ENCODE measurements at regions of chr7 and their contacts with region 1.

Region 1: DNA sequence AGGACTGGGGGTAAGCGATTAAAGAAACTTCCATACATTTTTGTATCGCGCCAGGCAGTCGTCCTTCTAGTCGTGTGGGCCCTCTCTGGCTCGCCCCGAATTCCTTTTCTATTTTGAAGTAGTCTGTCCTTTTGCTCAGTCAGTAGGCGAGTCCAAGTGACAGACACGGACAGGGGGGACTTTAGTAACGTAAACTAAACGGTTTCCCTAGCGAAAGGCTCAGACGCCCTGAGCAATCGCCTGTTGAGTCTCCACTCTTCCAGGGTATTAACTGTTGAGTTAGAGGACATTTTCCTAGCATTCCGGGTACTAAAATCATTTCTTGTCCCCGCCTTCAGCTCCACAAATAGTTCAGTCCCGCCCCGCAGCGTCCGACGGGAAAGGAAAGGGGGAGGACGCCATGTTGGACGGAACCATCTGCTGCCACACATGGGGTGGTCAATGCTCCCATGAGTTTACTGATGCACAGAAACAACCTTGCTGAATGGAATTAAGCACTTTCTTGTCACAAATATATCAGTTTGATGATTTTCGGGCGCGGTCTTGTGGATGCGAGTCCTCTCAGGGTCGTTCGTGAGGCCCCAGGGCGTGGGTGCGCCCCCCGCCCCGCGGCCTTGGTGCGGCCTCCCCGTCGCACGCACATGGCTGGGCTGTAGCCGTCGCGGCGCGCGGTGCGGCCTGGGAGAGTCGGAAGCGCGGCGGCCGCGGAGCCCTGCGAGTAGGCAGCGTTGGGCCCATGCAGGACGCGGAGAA is at the start of gene EIF3B:
- DNase-seq: peak; percentile 91 to 96 (median 95)
- H3K4me3 ChIP-seq: peak within 1 kb of the TSS; percentile 68 to 90
- H3K4me3 Mint-ChIP-seq: peak within 1 kb of the TSS; percentile 89 to 98 (median 95)
- H3K27ac ChIP-seq: peak within 1 kb of the TSS; percentile 95
- H3K27ac Mint-ChIP-seq: peak within 1 kb of the TSS; percentile 99 to 100 (median 100)
- H3K4me1 ChIP-seq: peaks cover 46% of the 10 kb centered on the region
- H3K4me1 Mint-ChIP-seq: peaks cover 16 to 48% (median 35%) of the 10 kb centered on the region in 4 donors
- H3K27me3 ChIP-seq: no peaks in the 10 kb centered on the region
- H3K27me3 Mint-ChIP-seq: no peaks in the 10 kb centered on the region
- total RNA-seq, gene EIF3B: 126 to 138 TPM

Region 2: DNA sequence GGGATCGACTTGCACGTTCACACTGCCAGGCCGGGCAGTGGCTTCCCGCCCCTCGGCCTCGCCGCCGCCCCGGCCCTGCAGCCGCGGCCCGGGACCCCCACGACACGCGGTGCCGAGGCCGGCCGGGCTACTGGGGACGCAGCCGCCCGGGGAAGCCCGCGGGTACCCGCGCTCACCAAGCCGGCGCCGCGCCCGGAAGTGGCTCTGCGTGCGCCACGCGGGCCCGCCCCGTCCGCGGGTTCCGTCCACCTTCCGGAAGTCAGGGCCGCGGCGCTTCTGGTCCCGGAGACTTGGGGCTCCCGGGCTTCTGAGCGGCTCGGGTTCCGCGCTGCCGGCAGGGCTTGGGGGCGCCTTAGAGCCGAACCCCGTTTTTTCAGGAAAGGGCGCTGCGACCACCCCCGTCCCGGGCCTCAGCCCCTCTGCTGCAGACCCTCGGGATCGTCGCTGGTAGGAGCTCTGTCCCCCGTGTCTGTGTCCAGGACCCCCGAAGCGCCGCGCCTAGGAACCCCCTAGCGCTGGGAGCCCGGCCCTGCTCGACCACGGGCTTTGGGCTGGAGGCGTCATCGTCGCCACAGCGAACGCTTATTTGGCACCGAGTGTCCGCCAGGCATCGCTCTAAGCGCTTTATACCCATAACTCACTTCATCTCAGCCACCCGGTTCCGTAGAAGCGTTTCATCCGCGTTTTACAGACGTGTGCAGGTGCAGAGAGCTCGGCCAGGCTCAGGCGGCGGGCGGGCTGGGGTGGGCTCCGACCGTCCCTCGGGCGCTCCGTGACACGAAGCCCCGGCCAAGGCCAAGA is 784.3 kb before region 1 on chr7 and contains the start of gene PSMG3:
- CTCF ChIA-PET with region 1: no interaction called
- POLR2A ChIA-PET with region 1: interaction called, 12 read pairs
- intact Hi-C with region 1: no loop called
- DNase-seq: peak; percentile 83 to 87 (median 85)
- H3K4me3 ChIP-seq: peak within 1 kb of the TSS; percentile 60 to 76
- H3K4me3 Mint-ChIP-seq: peak within 1 kb of the TSS; percentile 86 to 91 (median 88)
- H3K27ac ChIP-seq: peak within 1 kb of the TSS; percentile 77
- H3K27ac Mint-ChIP-seq: peak within 1 kb of the TSS; percentile 87 to 97 (median 94)
- H3K4me1 ChIP-seq: peaks cover 20% of the 10 kb centered on the region
- H3K4me1 Mint-ChIP-seq: peaks cover 11 to 40% (median 21%) of the 10 kb centered on the region in 4 donors
- H3K27me3 ChIP-seq: no peaks in the 10 kb centered on the region
- H3K27me3 Mint-ChIP-seq: no peaks in the 10 kb centered on the region
- total RNA-seq, gene PSMG3: 19.3 to 22.2 TPM

Region 3: DNA sequence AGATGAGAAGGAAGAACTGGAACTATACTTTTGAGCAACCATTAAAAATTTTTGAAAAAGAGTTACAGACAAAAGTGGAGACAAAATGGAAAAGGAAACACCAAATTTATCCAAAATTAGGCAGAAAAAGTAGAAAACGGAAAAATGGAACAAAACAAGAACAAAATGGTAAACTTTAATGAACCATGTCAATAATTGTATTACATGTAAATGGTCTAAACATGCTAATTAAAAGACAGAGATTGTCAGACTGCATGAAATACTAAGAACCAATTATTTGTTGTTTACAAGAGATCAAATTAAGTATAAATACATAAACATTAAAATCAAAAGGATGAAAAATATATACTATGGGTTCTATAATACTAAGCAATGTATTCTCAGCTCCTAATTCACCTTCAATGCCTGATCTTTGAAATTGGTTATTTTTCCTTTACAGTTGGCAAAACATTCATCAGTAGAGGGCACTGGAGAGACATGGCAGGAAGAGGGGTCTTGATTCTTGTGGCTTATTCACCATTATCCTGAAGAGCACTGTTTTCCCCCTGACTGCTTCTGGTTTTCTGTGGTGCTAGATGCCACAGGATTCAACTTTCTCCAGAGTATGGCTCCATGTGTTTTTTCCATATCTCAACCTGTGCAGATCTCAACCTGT is 559.3 kb before region 1 on chr7:
- CTCF ChIA-PET with region 1: no interaction called
- POLR2A ChIA-PET with region 1: no interaction called
- intact Hi-C with region 1: no loop called
- DNase-seq: no peak
- H3K4me3 ChIP-seq: no peak overlapping the region
- H3K4me3 Mint-ChIP-seq: no peak overlapping the region
- H3K27ac ChIP-seq: no peak overlapping the region
- H3K27ac Mint-ChIP-seq: no peak overlapping the region
- H3K4me1 ChIP-seq: no peaks in the 10 kb centered on the region
- H3K4me1 Mint-ChIP-seq: no peaks in the 10 kb centered on the region
- H3K27me3 ChIP-seq: peaks cover 5% of the 10 kb centered on the region
- H3K27me3 Mint-ChIP-seq: peaks cover 10 to 17% of the 10 kb centered on the region in 2 donors

Region 4: DNA sequence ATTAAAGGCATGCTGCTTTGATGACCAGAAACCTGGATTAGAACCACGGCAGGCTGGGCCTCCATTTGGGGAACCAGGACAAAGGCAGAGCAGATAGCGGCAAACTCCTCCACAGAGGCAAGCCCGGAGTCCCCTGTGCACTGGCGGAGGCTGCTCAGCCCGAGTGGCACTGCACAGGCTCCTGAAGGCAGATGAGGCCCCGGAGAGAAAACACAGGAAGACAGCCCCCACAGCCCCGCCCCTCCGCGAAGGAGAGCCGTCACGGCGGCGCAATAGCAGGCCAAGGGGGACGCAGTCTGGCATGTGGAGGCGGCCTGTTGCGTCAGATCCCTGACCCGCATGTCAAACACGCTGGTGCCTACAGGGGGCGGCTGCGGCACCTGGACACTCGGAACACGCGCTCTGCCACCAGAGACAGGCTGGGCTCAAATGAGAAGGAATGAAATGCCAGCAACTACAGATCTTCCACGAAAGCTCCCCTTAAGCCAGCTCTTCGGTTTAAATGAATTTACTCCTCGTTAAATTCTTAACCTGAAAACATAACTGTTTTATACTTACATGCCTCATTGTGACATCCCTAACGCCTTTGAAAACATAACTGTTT is 250.2 kb before region 1 on chr7:
- CTCF ChIA-PET with region 1: no interaction called
- POLR2A ChIA-PET with region 1: no interaction called
- intact Hi-C with region 1: loop called (anchors 5 kb)
- DNase-seq: peak; percentile 22 to 56 (median 44)
- H3K4me3 ChIP-seq: no peak overlapping the region
- H3K4me3 Mint-ChIP-seq: peak overlapping the region in 2 of 8 donors; percentile 11 to 43
- H3K27ac ChIP-seq: no peak overlapping the region
- H3K27ac Mint-ChIP-seq: peak overlapping the region in 3 of 7 donors; percentile 15 to 53 (median 52)
- H3K4me1 ChIP-seq: peaks cover 24% of the 10 kb centered on the region
- H3K4me1 Mint-ChIP-seq: peaks cover 16 to 28% (median 21%) of the 10 kb centered on the region in 4 donors
- H3K27me3 ChIP-seq: no peaks in the 10 kb centered on the region
- H3K27me3 Mint-ChIP-seq: no peaks in the 10 kb centered on the region

Region 5: GRCh38 chr7:2314209-2314955 is 40.0 kb before region 1 on chr7 and contains the start of gene SNX8:
- CTCF ChIA-PET with region 1: no interaction called
- POLR2A ChIA-PET with region 1: interaction called, 6 read pairs
- intact Hi-C with region 1: loop called (anchors 1 kb)
- DNase-seq: peak; percentile 93 to 98 (median 95)
- H3K4me3 ChIP-seq: peak within 1 kb of the TSS; percentile 57 to 61
- H3K4me3 Mint-ChIP-seq: peak within 1 kb of the TSS; percentile 89 to 96 (median 93)
- H3K27ac ChIP-seq: peak within 1 kb of the TSS; percentile 32
- H3K27ac Mint-ChIP-seq: peak within 1 kb of the TSS; percentile 81 to 94 (median 90)
- H3K4me1 ChIP-seq: peaks cover 8% of the 10 kb centered on the region
- H3K4me1 Mint-ChIP-seq: peaks cover 6 to 20% (median 10%) of the 10 kb centered on the region in 4 donors
- H3K27me3 ChIP-seq: no peaks in the 10 kb centered on the region
- H3K27me3 Mint-ChIP-seq: no peaks in the 10 kb centered on the region
- total RNA-seq, gene SNX8: 6.9 to 9.9 TPM

Region 6: GRCh38 chr7:2431260-2431867 is 77.0 kb after region 1 on chr7:
- CTCF ChIA-PET with region 1: interaction called, 4 read pairs
- POLR2A ChIA-PET with region 1: interaction called, 13 read pairs
- intact Hi-C with region 1: no loop called
- DNase-seq: peak in 4 of 5 donors; percentile 33 to 53 (median 42)
- H3K4me3 ChIP-seq: no peak overlapping the region
- H3K4me3 Mint-ChIP-seq: no peak overlapping the region
- H3K27ac ChIP-seq: no peak overlapping the region
- H3K27ac Mint-ChIP-seq: peak overlapping the region in 2 of 7 donors; percentile 27 to 30
- H3K4me1 ChIP-seq: no peaks in the 10 kb centered on the region
- H3K4me1 Mint-ChIP-seq: peaks cover 2 to 23% (median 18%) of the 10 kb centered on the region in 4 donors
- H3K27me3 ChIP-seq: no peaks in the 10 kb centered on the region
- H3K27me3 Mint-ChIP-seq: no peaks in the 10 kb centered on the region

Region 7: GRCh38 chr7:2555121-2556052 is 201.0 kb after region 1 on chr7 and contains the start of gene BRAT1:
- CTCF ChIA-PET with region 1: no interaction called
- POLR2A ChIA-PET with region 1: no interaction called
- intact Hi-C with region 1: no loop called
- DNase-seq: peak; percentile 91 to 95 (median 92)
- H3K4me3 ChIP-seq: peak within 1 kb of the TSS; percentile 52 to 82
- H3K4me3 Mint-ChIP-seq: peak within 1 kb of the TSS; percentile 84 to 91 (median 86)
- H3K27ac ChIP-seq: peak within 1 kb of the TSS; percentile 97
- H3K27ac Mint-ChIP-seq: peak within 1 kb of the TSS; percentile 81 to 92 (median 85)
- H3K4me1 ChIP-seq: peaks cover 49% of the 10 kb centered on the region
- H3K4me1 Mint-ChIP-seq: peaks cover 18 to 51% (median 31%) of the 10 kb centered on the region in 4 donors
- H3K27me3 ChIP-seq: no peaks in the 10 kb centered on the region
- H3K27me3 Mint-ChIP-seq: no peaks in the 10 kb centered on the region
- total RNA-seq, gene BRAT1: 37.0 to 41.4 TPM

Measured in CD4-positive, alpha-beta memory T cell (primary cell).